ENCODE measurements at regions of chr2 and their contacts with region 1.

Region 1: DNA sequence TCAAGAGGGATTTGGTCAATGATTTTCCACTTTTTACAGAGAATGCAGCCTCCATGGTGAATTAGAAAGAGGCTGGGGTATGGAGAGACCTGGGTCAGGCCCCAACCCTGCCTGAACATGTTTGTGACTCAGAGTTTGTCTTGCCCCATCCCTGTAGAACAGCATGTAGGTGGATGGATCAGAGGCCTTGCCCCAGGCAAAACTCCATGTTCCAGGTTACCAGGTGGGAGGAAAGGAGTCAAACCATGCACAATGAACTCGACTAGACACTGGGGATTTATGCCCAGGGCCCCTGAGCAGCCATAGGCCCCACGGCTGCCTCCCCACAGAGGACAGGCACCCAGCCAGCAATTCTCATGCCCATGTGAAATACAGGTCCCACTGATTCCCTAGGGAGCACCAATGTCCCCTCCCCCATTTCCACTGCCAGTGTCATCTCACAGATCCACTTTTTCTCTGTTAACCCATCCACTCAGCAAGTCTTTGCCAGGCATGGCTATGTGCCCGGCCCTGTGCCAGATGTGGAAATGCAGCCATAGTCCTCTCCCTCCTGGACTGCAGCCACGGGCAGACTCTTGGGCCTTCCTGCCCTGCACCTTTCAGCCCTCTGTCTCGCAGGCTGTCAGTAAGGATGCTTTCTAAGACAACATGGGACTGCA is 737.8 kb upstream of the HS6ST1 start:
- DNase-seq: no peak
- ATAC-seq: no peak
- H3K4me3 ChIP-seq: no peak overlapping the region
- H3K4me3 Mint-ChIP-seq: no peak overlapping the region
- H3K27ac ChIP-seq: no peak overlapping the region
- H3K27ac Mint-ChIP-seq: no peak overlapping the region
- H3K4me1 ChIP-seq: no peaks in the 10 kb centered on the region
- H3K4me1 Mint-ChIP-seq: no peaks in the 10 kb centered on the region
- H3K27me3 ChIP-seq: no peaks in the 10 kb centered on the region
- H3K27me3 Mint-ChIP-seq: no peaks in the 10 kb centered on the region
- CTCF ChIP-seq: no peak

Region 2: DNA sequence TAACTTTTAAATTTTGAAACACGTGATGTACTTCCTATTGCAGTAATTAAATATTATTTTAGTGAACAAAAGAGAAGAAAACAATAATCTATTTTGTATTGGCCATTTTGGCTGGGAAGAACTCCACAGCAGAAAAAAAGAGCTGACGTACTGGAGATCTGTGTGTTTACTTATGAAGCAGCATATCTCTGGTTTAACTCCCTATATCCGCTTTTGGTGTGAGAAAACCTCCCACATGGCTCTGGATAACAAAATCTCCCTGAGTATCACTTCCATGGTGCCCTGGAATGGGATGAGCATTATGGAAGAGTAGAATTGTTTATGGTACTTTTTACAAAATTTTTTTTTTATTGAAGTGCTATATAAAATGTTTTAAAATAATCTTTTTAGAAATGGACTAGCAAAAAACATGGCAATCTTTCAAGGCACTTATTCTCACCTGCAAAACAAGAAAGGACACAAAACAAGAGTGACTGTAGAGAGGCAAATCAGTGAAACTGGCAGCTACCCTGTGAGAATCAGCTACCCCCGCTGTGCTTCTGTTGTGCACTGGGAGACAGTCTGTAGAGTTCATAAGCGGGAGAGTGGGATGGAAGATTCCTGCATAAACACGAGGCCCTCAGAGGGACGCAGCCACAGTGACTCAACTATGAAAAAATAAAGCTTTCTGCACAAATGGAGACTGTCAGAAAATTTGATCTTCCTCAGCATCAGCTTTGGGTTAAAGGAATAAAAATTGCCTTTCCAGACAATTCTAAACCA is 24.5 kb after region 1 on chr2:
- CTCF ChIA-PET with region 1: no interaction called
- POLR2A ChIA-PET with region 1: no interaction called
- intact Hi-C with region 1: loop called in 1 of 2 experiments (anchors 1 kb)
- DNase-seq: no peak
- ATAC-seq: no peak
- H3K4me3 ChIP-seq: no peak overlapping the region
- H3K4me3 Mint-ChIP-seq: no peak overlapping the region
- H3K27ac ChIP-seq: no peak overlapping the region
- H3K27ac Mint-ChIP-seq: no peak overlapping the region
- H3K4me1 ChIP-seq: no peaks in the 10 kb centered on the region
- H3K4me1 Mint-ChIP-seq: no peaks in the 10 kb centered on the region
- H3K27me3 ChIP-seq: no peaks in the 10 kb centered on the region
- H3K27me3 Mint-ChIP-seq: no peaks in the 10 kb centered on the region
- CTCF ChIP-seq: no peak